AG04450 (cell line): ENCODE measurements at regions of chr4 and their contacts with region 1.

Region 1: GRCh38 chr4:185054876-185055275 is 36.6 kb downstream of the HELT start:
- DNase-seq: no peak
- H3K4me3 ChIP-seq: no peak overlapping the region
- H3K27ac ChIP-seq: no peak overlapping the region
- H3K27me3 ChIP-seq: no peaks in the 10 kb centered on the region
- CTCF ChIP-seq: no peak

Region 2: GRCh38 chr4:185039508-185040273 is 15.2 kb before region 1 on chr4:
- CTCF ChIA-PET with region 1: interaction called, 12 read pairs
- POLR2A ChIA-PET with region 1: no interaction called
- DNase-seq: peak; percentile 37
- H3K4me3 ChIP-seq: peak overlapping the region; percentile 38
- H3K27ac ChIP-seq: no peak overlapping the region
- H3K27me3 ChIP-seq: peaks cover 7% of the 10 kb centered on the region
- CTCF ChIP-seq: peak; percentile 90